Activated B cell treated with CpG ODN at 0.5 μM for 24 hours (primary cell): ENCODE measurements at regions of chr20 and their contacts with region 1.

Region 1: DNA sequence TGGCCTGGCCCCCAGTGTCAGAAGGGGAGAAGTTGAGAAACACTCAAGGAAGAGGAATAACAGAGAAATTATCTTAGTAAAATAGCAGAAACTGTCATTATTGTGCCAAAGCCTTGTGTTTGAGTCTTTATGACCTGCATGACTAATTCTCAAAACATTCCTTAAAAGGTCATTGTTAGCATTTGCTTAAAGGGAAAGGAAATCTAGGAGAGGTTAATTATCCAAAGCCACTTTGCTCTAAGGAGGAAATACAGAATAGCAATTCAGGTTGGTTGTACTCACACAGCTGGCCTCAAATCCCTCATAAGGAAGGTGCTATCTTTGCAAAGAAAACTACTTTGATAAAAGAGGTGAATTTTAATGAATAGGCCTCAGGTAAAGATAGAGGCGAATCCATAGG is 516.7 kb downstream of the CBLN4 start:
- DNase-seq: no peak
- ATAC-seq: no peak
- H3K4me3 Mint-ChIP-seq: no peak overlapping the region
- H3K27ac Mint-ChIP-seq: no peak overlapping the region
- H3K4me1 Mint-ChIP-seq: no peaks in the 10 kb centered on the region
- H3K27me3 Mint-ChIP-seq: no peaks in the 10 kb centered on the region
- CTCF ChIP-seq: no peak

Region 2: GRCh38 chr20:55538261-55538908 is 49.8 kb after region 1 on chr20:
- CTCF ChIA-PET with region 1: no interaction called
- POLR2A ChIA-PET with region 1: no interaction called
- intact Hi-C with region 1: loop called (anchors 5 kb)
- DNase-seq: no peak
- ATAC-seq: no peak
- H3K4me3 Mint-ChIP-seq: no peak overlapping the region
- H3K27ac Mint-ChIP-seq: no peak overlapping the region
- H3K4me1 Mint-ChIP-seq: no peaks in the 10 kb centered on the region
- H3K27me3 Mint-ChIP-seq: no peaks in the 10 kb centered on the region
- CTCF ChIP-seq: no peak

Region 3: GRCh38 chr20:55667955-55668354 is 179.4 kb after region 1 on chr20:
- CTCF ChIA-PET with region 1: no interaction called
- POLR2A ChIA-PET with region 1: no interaction called
- intact Hi-C with region 1: no loop called
- DNase-seq: no peak
- ATAC-seq: no peak
- H3K4me3 Mint-ChIP-seq: no peak overlapping the region
- H3K27ac Mint-ChIP-seq: no peak overlapping the region
- H3K4me1 Mint-ChIP-seq: no peaks in the 10 kb centered on the region
- H3K27me3 Mint-ChIP-seq: no peaks in the 10 kb centered on the region
- CTCF ChIP-seq: no peak